ENCODE measurements at regions of chr2 and their contacts with region 1.

Region 1: DNA sequence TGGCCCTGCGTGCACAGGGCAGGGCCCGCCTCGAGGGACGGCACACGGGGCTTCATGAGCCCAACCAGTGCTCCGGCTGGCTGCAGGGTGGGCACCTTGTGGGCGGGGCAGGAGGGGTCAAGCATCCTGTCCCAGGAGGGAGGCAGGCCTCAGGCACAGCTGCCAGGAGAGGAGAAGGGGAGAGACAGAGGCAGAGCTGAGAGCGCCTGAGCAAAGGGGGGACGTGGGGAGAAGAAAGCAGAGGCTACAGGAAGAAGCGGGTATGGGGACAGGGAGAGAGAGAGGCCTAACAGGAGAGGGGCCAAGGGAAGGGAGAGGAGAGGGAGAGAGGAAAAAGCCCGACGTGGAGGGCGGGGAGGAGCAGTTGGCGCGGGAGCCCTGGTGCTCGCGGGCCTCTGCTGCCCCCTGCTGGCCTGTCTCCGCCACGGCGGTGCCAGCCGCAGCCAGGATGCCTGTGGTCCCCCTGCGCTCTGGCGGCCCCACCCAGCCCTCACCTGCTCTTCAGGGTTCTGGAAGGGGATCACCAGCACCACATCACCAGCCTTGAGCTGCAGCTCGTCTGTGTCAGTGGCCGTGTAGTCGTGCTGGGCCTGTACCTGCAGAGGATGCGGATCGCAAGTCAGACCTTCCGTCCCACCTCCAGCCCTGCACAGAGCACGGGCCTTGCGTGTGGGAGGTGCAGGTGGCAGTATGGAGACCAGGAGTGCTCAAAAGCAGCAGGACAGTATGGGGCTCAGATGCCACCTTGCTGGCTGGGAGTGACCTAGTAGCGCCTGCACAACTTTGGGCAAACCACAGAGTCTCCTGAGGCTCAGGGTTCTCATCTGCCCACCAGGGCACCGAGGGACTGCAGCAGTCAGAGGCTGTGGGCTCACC is 56.8 kb downstream of the BIN1 start:
- DNase-seq: peak in 1 of 2 donors; percentile 71
- ATAC-seq: peak in 1 of 2 donors; percentile 8
- H3K4me3 ChIP-seq: no peak overlapping the region
- H3K27ac ChIP-seq: peak overlapping the region; percentile 97 to 100 (median 100)
- H3K4me1 ChIP-seq: peaks cover 44 to 78% of the 10 kb centered on the region in 2 donors
- H3K27me3 ChIP-seq: no peaks in the 10 kb centered on the region
- CTCF ChIP-seq: peak; percentile 95 to 97 (median 95)
- POLR2A ChIP-seq: no peak

Region 2: DNA sequence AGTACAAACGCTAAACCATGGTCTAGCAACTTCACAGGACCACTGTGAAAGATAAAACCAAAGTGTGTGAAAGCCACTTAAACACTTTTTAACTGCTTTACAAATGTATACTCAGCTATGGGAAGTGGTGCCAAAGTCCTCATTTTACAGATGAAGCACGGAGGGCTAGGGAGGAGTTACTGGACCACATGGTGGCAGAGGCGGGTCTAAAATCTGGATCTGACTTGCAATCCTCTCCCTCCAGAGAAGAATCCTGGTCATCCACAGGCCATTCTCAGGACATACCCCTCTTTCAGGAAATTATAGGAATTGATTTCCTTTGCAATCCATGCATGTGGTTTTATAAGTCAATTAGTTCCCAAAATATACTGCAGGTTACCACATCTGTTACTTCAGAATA is 478.8 kb before region 1 on chr2:
- in situ Hi-C with region 1: no loop called
- intact Hi-C with region 1: no loop called
- DNase-seq: no peak
- ATAC-seq: no peak
- H3K4me3 ChIP-seq: no peak overlapping the region
- H3K27ac ChIP-seq: no peak overlapping the region
- H3K4me1 ChIP-seq: no peaks in the 10 kb centered on the region
- H3K27me3 ChIP-seq: no peaks in the 10 kb centered on the region
- CTCF ChIP-seq: no peak
- POLR2A ChIP-seq: no peak

Region 3: GRCh38 chr2:127064642-127065250 is 14.6 kb after region 1 on chr2:
- in situ Hi-C with region 1: no loop called
- intact Hi-C with region 1: no loop called
- DNase-seq: peak; percentile 96 to 99
- ATAC-seq: peak; percentile 51 to 64
- H3K4me3 ChIP-seq: peak overlapping the region in 3 of 4 donors; percentile 25 to 33 (median 31)
- H3K27ac ChIP-seq: peak overlapping the region; percentile 97 to 100 (median 100)
- H3K4me1 ChIP-seq: peaks cover 63 to 88% of the 10 kb centered on the region in 2 donors
- H3K27me3 ChIP-seq: no peaks in the 10 kb centered on the region
- CTCF ChIP-seq: peak in 2 of 5 experiments; percentile 8 to 48
- POLR2A ChIP-seq: peak; percentile 71 to 74

Region 4: GRCh38 chr2:127106951-127107621 is 56.9 kb after region 1 on chr2 and contains the start of gene BIN1:
- in situ Hi-C with region 1: no loop called
- intact Hi-C with region 1: loop called (anchors 2 kb)
- DNase-seq: peak; percentile 87 to 96
- ATAC-seq: peak; percentile 56 to 60
- H3K4me3 ChIP-seq: peak within 1 kb of the TSS; percentile 81 to 95 (median 90)
- H3K27ac ChIP-seq: peak within 1 kb of the TSS; percentile 97 to 100 (median 100)
- H3K4me1 ChIP-seq: peaks cover 26 to 44% of the 10 kb centered on the region in 2 donors
- H3K27me3 ChIP-seq: no peaks in the 10 kb centered on the region
- CTCF ChIP-seq: peak in 2 of 5 experiments; percentile 3 to 10
- POLR2A ChIP-seq: peak; percentile 99
- total RNA-seq, gene BIN1: 1,150 to 2,167 (median 1,736) TPM

Region 5: DNA sequence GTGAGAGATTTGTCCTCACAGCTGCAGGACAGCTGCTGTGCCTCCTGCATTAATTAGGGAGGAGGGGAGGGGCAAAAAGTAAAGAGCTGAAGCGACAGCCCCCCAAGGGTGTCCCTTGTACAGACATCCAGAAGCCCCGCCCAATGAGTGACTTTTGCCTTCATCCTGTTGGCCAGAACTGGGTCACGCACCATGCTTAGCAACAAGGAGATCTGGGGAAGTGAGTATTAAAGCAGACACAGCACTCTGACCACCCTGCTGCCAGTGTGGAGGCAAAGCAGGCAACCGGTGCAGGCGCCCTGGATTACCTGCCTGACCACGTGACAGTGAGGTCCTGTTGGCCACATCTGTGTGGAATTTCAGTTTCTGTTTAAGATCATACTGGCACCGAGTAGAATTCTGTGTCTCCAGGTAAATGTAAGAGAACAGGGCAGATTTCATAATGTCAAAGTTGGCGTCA is 78.3 kb after region 1 on chr2:
- in situ Hi-C with region 1: no loop called
- intact Hi-C with region 1: no loop called
- DNase-seq: no peak
- ATAC-seq: no peak
- H3K4me3 ChIP-seq: no peak overlapping the region
- H3K27ac ChIP-seq: no peak overlapping the region
- H3K4me1 ChIP-seq: no peaks in the 10 kb centered on the region
- H3K27me3 ChIP-seq: no peaks in the 10 kb centered on the region
- CTCF ChIP-seq: no peak
- POLR2A ChIP-seq: no peak

Region 6: GRCh38 chr2:127508631-127509034 is 458.5 kb after region 1 on chr2:
- in situ Hi-C with region 1: loop called in 1 of 4 experiments (anchors 25 kb)
- intact Hi-C with region 1: no loop called
- DNase-seq: peak; percentile 87 to 89
- ATAC-seq: peak; percentile 92 to 98
- H3K4me3 ChIP-seq: no peak overlapping the region
- H3K27ac ChIP-seq: peak overlapping the region; percentile 88 to 92 (median 90)
- H3K4me1 ChIP-seq: peaks cover 65% of the 10 kb centered on the region in 2 donors
- H3K27me3 ChIP-seq: no peaks in the 10 kb centered on the region
- CTCF ChIP-seq: no peak
- POLR2A ChIP-seq: no peak

Measured in gastrocnemius medialis (tissue), 4 donors.